Naive thymus-derived CD4-positive, alpha-beta T cell (primary cell): ENCODE measurements at regions of chr10 and their contacts with region 1.

Region 1: GRCh38 chr10:79463578-79464496 is 18.4 kb upstream of the ZCCHC24 start:
- DNase-seq: no peak
- ATAC-seq: no peak
- H3K4me3 ChIP-seq: no peak overlapping the region
- H3K4me3 Mint-ChIP-seq: no peak overlapping the region
- H3K27ac ChIP-seq: no peak overlapping the region
- H3K27ac Mint-ChIP-seq: no peak overlapping the region
- H3K4me1 ChIP-seq: no peaks in the 10 kb centered on the region
- H3K4me1 Mint-ChIP-seq: peaks cover 0 to 2% (median 0%) of the 10 kb centered on the region in 7 donors
- H3K27me3 ChIP-seq: no peaks in the 10 kb centered on the region
- H3K27me3 Mint-ChIP-seq: peaks cover 0 to 9% (median 0%) of the 10 kb centered on the region in 5 donors

Region 2: GRCh38 chr10:78047314-78047891 is 1416.4 kb before region 1 on chr10:
- CTCF ChIA-PET with region 1: no interaction called
- POLR2A ChIA-PET with region 1: no interaction called
- intact Hi-C with region 1: loop called in 1 of 2 experiments (anchors 2 kb)
- DNase-seq: peak; percentile 65 to 80 (median 74)
- ATAC-seq: peak; percentile 92
- H3K4me3 ChIP-seq: no peak overlapping the region
- H3K4me3 Mint-ChIP-seq: peak overlapping the region in 2 of 10 donors; percentile 11 to 27
- H3K27ac ChIP-seq: no peak overlapping the region
- H3K27ac Mint-ChIP-seq: peak overlapping the region in 2 of 9 donors; percentile 4 to 9
- H3K4me1 ChIP-seq: no peaks in the 10 kb centered on the region
- H3K4me1 Mint-ChIP-seq: peaks cover 5 to 26% (median 16%) of the 10 kb centered on the region in 7 donors
- H3K27me3 ChIP-seq: no peaks in the 10 kb centered on the region
- H3K27me3 Mint-ChIP-seq: no peaks in the 10 kb centered on the region

Region 3: DNA sequence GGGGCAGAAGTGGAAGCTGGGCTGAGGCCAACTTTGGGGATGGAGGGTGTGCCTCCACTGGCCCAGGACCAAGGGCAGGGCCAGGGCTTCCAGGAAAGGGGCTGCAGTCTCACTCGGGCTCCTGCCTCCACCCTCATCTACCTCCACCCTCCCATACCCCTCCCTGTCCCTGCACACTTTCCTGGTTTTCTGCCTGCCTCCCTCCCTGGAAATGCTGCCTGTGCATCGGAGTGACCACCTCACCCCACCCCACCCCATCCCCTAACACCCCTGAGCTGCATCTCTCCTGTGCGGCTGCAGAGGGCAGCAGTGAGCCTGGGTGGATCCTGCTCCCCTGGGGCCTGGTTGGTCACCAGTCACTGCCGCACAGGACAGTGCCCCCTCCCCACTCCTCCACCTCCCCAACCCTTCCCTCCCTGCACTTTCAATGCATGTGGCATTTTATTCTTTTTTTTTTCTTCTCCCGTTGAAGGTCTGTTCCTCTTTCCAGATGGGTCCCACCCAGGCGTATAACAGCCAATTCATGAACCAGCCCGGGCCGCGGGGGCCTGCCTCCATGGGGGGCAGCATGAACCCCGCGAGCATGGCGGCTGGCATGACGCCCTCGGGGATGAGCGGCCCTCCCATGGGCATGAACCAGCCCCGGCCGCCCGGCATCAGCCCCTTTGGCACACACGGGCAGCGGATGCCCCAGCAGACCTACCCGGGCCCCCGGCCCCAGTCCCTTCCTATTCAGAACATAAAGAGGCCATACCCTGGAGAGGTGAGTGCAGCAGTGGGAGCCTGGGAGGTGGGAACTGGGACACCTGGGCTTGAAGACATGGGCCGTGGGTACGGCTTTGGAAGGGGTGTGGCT is 170.7 kb before region 1 on chr10:
- CTCF ChIA-PET with region 1: interaction called, 3 read pairs
- POLR2A ChIA-PET with region 1: no interaction called
- intact Hi-C with region 1: loop called in 1 of 2 experiments (anchors 1 kb)
- DNase-seq: peak in 2 of 9 donors; percentile 10 to 25
- ATAC-seq: peak; percentile 57
- H3K4me3 ChIP-seq: no peak overlapping the region
- H3K4me3 Mint-ChIP-seq: no peak overlapping the region
- H3K27ac ChIP-seq: no peak overlapping the region
- H3K27ac Mint-ChIP-seq: no peak overlapping the region
- H3K4me1 ChIP-seq: no peaks in the 10 kb centered on the region
- H3K4me1 Mint-ChIP-seq: peaks cover 0 to 40% (median 5%) of the 10 kb centered on the region in 7 donors
- H3K27me3 ChIP-seq: no peaks in the 10 kb centered on the region
- H3K27me3 Mint-ChIP-seq: no peaks in the 10 kb centered on the region

Region 4: GRCh38 chr10:79374312-79375191 is 89.3 kb before region 1 on chr10:
- CTCF ChIA-PET with region 1: interaction called, 22 read pairs
- POLR2A ChIA-PET with region 1: no interaction called
- intact Hi-C with region 1: loop called (anchors 1 kb)
- DNase-seq: peak; percentile 39 to 78 (median 67)
- ATAC-seq: peak; percentile 85
- H3K4me3 ChIP-seq: no peak overlapping the region
- H3K4me3 Mint-ChIP-seq: no peak overlapping the region
- H3K27ac ChIP-seq: no peak overlapping the region
- H3K27ac Mint-ChIP-seq: peak overlapping the region in 1 of 9 donors; percentile 42
- H3K4me1 ChIP-seq: peaks cover 0 to 5% of the 10 kb centered on the region in 2 donors
- H3K4me1 Mint-ChIP-seq: peaks cover 0 to 11% (median 4%) of the 10 kb centered on the region in 7 donors
- H3K27me3 ChIP-seq: no peaks in the 10 kb centered on the region
- H3K27me3 Mint-ChIP-seq: peaks cover 0 to 30% (median 0%) of the 10 kb centered on the region in 5 donors

Region 5: GRCh38 chr10:79400146-79401004 is 63.5 kb before region 1 on chr10:
- CTCF ChIA-PET with region 1: interaction called, 3 read pairs
- POLR2A ChIA-PET with region 1: no interaction called
- intact Hi-C with region 1: loop called (anchors 1 kb)
- DNase-seq: peak in 6 of 9 donors; percentile 8 to 68 (median 16)
- ATAC-seq: peak; percentile 63
- H3K4me3 ChIP-seq: no peak overlapping the region
- H3K4me3 Mint-ChIP-seq: no peak overlapping the region
- H3K27ac ChIP-seq: no peak overlapping the region
- H3K27ac Mint-ChIP-seq: no peak overlapping the region
- H3K4me1 ChIP-seq: no peaks in the 10 kb centered on the region
- H3K4me1 Mint-ChIP-seq: peaks cover 0 to 11% (median 6%) of the 10 kb centered on the region in 7 donors
- H3K27me3 ChIP-seq: no peaks in the 10 kb centered on the region
- H3K27me3 Mint-ChIP-seq: peaks cover 0 to 4% (median 0%) of the 10 kb centered on the region in 5 donors